Colonic mucosa (tissue), 4 donors: ENCODE measurements at regions of chr1 and their contacts with region 1.

Region 1: GRCh38 chr1:224513787-224514209 is 79.2 kb upstream of the WDR26 start:
- DNase-seq: peak; percentile 94
- H3K4me3 ChIP-seq: no peak overlapping the region
- H3K27ac ChIP-seq: no peak overlapping the region
- H3K4me1 ChIP-seq: peaks cover 9% of the 10 kb centered on the region
- H3K27me3 ChIP-seq: no peaks in the 10 kb centered on the region
- CTCF ChIP-seq: peak; percentile 79

Region 2: GRCh38 chr1:224922404-224923164 is 408.8 kb after region 1 on chr1:
- intact Hi-C with region 1: loop called (anchors 5 kb)
- DNase-seq: no peak
- H3K4me3 ChIP-seq: no peak overlapping the region
- H3K27ac ChIP-seq: no peak overlapping the region
- H3K4me1 ChIP-seq: no peaks in the 10 kb centered on the region
- H3K27me3 ChIP-seq: no peaks in the 10 kb centered on the region
- CTCF ChIP-seq: peak; percentile 57